Activated T-helper 2 cell treated with anti-CD3 and anti-CD28 coated beads, Interferon-gamma antibody, Interleukin-2, Interleukin-4, amounts not matched to agents 10 μg/mL and 5 μg/mL and 100 μg/mL, durations not matched to agents 14 hours and 24 hours and 36 hours (primary cell): ENCODE measurements at regions of chr21 and their contacts with region 1.

Region 1: DNA sequence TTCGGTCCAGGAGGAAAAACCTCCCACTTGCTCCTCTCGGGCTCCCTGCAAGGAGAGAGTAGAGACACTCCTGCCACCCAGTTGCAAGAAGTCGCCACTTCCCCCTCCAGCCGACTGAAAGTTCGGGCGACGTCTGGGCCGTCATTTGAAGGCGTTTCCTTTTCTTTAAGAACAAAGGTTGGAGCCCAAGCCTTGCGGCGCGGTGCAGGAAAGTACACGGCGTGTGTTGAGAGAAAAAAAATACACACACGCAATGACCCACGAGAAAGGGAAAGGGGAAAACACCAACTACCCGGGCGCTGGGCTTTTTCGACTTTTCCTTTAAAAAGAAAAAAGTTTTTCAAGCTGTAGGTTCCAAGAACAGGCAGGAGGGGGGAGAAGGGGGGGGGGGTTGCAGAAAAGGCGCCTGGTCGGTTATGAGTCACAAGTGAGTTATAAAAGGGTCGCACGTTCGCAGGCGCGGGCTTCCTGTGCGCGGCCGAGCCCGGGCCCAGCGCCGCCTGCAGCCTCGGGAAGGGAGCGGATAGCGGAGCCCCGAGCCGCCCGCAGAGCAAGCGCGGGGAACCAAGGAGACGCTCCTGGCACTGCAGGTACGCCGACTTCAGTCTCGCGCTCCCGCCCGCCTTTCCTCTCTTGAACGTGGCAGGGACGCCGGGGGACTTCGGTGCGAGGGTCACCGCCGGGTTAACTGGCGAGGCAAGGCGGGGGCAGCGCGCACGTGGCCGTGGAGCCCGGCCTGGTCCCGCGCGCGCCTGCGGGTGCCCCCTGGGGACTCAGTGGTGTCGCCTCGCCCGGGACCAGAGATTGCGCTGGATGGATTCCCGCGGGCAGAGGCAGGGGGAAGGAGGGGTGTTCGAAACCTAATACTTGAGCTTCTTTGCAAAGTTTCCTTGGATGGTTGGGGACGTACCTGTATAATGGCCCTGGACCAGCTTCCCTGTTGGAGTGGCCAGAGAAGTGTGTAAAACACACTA is 45.3 kb downstream of the MRPL39 start:
- DNase-seq: peak; percentile 68
- H3K4me3 Mint-ChIP-seq: peak overlapping the region; percentile 91
- H3K27ac Mint-ChIP-seq: peak overlapping the region; percentile 99
- H3K4me1 Mint-ChIP-seq: peaks cover 54% of the 10 kb centered on the region
- H3K27me3 Mint-ChIP-seq: no peaks in the 10 kb centered on the region

Region 2: DNA sequence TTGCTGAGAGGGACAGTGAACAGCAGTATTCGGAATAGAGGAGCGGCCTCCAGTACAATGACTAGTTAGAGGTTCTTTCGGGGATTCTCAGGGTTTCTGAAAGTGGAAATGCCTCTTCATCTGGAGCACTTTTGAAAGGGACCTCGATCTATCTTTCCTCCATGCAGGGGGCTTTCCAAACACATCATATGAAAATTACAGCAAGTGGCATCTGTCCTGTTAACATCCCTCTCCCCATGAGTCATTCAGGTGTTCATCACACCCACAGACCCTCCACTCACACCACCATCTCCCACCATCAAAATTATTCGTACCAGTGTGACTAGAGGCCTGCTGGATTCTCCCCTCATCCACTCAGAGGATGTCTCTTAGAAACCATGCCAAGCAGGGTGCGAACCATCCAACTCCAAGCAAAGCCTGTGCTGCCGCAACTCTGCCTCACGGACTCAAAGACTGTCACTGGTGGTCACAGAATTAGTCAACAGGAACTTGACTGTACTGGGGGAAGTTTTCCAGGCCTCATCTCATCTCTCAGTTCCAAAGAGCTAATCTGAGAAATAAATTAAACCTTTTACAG is 165.7 kb before region 1 on chr21:
- intact Hi-C with region 1: loop called (anchors 1 kb)
- DNase-seq: peak; percentile 48
- H3K4me3 Mint-ChIP-seq: peak overlapping the region; percentile 2
- H3K27ac Mint-ChIP-seq: peak overlapping the region; percentile 88
- H3K4me1 Mint-ChIP-seq: peaks cover 17% of the 10 kb centered on the region
- H3K27me3 Mint-ChIP-seq: no peaks in the 10 kb centered on the region

Region 3: GRCh38 chr21:25457411-25457810 is 104.5 kb before region 1 on chr21:
- intact Hi-C with region 1: loop called (anchors 1 kb)
- DNase-seq: no peak
- H3K4me3 Mint-ChIP-seq: peak overlapping the region; percentile 58
- H3K27ac Mint-ChIP-seq: peak overlapping the region; percentile 84
- H3K4me1 Mint-ChIP-seq: peaks cover 50% of the 10 kb centered on the region
- H3K27me3 Mint-ChIP-seq: no peaks in the 10 kb centered on the region

Region 4: DNA sequence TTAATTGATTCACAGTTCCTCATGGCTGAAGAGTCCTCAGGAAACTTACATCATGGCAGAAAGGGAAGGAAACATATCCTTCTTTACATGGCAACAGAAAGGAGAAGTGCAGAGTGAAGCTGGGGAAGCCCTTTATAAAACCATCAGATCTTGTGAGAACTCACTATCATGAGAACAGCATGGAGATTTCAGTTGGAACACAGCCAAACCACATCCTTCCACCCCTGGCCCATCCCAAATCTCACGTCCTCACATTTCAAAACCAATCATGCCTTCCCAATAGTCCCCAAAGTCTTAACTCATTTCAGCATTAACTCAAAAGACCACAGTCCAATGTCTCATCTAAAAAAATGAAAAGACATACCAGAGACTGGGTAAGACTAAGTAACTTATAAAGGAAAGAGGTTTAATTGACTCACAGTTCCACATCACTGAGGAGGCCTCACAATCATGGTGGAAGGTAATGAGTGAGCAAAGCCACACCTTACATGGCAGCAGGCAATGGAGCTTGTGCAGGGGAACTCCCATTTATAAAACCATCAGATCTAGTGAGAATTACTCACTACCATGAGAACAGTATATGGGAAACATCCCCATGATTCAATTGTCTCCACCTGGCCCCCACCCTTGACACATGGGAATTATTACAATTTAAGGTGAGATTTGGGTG is 59.8 kb before region 1 on chr21:
- intact Hi-C with region 1: loop called (anchors 1 kb)
- DNase-seq: no peak
- H3K4me3 Mint-ChIP-seq: no peak overlapping the region
- H3K27ac Mint-ChIP-seq: peak overlapping the region; percentile 92
- H3K4me1 Mint-ChIP-seq: peaks cover 40% of the 10 kb centered on the region
- H3K27me3 Mint-ChIP-seq: no peaks in the 10 kb centered on the region

Region 5: GRCh38 chr21:25509862-25510261 is 52.1 kb before region 1 on chr21:
- intact Hi-C with region 1: loop called (anchors 1 kb)
- DNase-seq: no peak
- H3K4me3 Mint-ChIP-seq: peak overlapping the region; percentile 27
- H3K27ac Mint-ChIP-seq: peak overlapping the region; percentile 63
- H3K4me1 Mint-ChIP-seq: peaks cover 51% of the 10 kb centered on the region
- H3K27me3 Mint-ChIP-seq: no peaks in the 10 kb centered on the region

Region 6: GRCh38 chr21:25573409-25574206 is 11.7 kb after region 1 on chr21:
- intact Hi-C with region 1: loop called (anchors 1 kb)
- DNase-seq: peak; percentile 38
- H3K4me3 Mint-ChIP-seq: peak overlapping the region; percentile 77
- H3K27ac Mint-ChIP-seq: peak overlapping the region; percentile 93
- H3K4me1 Mint-ChIP-seq: peaks cover 76% of the 10 kb centered on the region
- H3K27me3 Mint-ChIP-seq: no peaks in the 10 kb centered on the region